MCF 10A (cell line): ENCODE measurements at regions of chr18 and their contacts with region 1.

Region 1: GRCh38 chr18:62522504-62523254 is at the start of gene ZCCHC2:
- DNase-seq: peak; percentile 96
- H3K4me3 Mint-ChIP-seq: peak within 1 kb of the TSS; percentile 76
- H3K27ac Mint-ChIP-seq: peak within 1 kb of the TSS; percentile 58
- H3K4me1 Mint-ChIP-seq: peaks cover 13% of the 10 kb centered on the region
- H3K27me3 Mint-ChIP-seq: no peaks in the 10 kb centered on the region
- CTCF ChIP-seq: no peak
- total RNA-seq, gene ZCCHC2: 14.6 and 15.0 TPM in 2 replicates

Region 2: GRCh38 chr18:62186774-62187542 is 335.7 kb before region 1 on chr18 and contains the starts of genes PIGN and RELCH:
- CTCF ChIA-PET with region 1: no interaction called
- POLR2A ChIA-PET with region 1: interaction called, 8 read pairs
- intact Hi-C with region 1: loop called (anchors 10 kb)
- DNase-seq: peak; percentile 99
- H3K4me3 Mint-ChIP-seq: peak within 1 kb of the TSS; percentile 100
- H3K27ac Mint-ChIP-seq: peak within 1 kb of the TSS; percentile 95
- H3K4me1 Mint-ChIP-seq: peaks cover 11% of the 10 kb centered on the region
- H3K27me3 Mint-ChIP-seq: no peaks in the 10 kb centered on the region
- CTCF ChIP-seq: no peak
- total RNA-seq, gene PIGN: 29.4 and 29.5 TPM in 2 replicates
- total RNA-seq, gene RELCH: 20.7 and 24.7 TPM in 2 replicates

Region 3: DNA sequence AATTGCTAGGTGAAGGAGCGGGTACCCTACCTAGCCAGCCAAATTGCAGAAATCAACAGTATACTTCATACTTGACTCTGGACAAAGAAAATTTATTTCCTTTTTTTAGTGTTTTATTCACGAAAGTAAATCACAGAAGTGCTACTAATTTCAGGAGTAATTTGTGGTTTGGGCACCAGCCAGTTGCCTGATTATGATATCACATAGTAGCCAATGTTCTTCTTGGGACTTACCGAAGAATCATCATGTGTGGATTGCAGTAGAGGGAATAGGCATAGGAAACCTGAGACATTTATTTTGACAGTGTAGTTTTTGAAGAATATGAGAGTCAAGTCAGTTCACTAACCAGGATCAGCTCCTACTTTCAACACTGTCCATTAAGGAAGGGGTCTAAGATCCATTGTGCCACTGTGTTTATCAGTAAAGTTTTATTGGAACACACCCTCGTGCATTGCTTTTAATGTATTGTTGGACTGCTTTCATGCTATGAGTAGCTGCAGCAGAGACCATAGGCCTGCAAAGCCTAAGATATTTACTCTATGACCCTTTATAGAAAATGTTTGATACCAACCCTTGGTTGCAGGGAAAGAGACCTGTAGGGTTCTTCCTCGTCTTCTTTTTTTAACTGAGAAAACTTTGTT is 165.5 kb before region 1 on chr18:
- CTCF ChIA-PET with region 1: no interaction called
- POLR2A ChIA-PET with region 1: no interaction called
- intact Hi-C with region 1: no loop called
- DNase-seq: no peak
- H3K4me3 Mint-ChIP-seq: no peak overlapping the region
- H3K27ac Mint-ChIP-seq: no peak overlapping the region
- H3K4me1 Mint-ChIP-seq: no peaks in the 10 kb centered on the region
- H3K27me3 Mint-ChIP-seq: no peaks in the 10 kb centered on the region
- CTCF ChIP-seq: no peak

Region 4: GRCh38 chr18:62437235-62438017 is 85.3 kb before region 1 on chr18:
- CTCF ChIA-PET with region 1: interaction called, 8 read pairs
- POLR2A ChIA-PET with region 1: interaction called, 117 read pairs
- intact Hi-C with region 1: no loop called
- DNase-seq: peak; percentile 95
- H3K4me3 Mint-ChIP-seq: peak overlapping the region; percentile 55
- H3K27ac Mint-ChIP-seq: peak overlapping the region; percentile 93
- H3K4me1 Mint-ChIP-seq: peaks cover 18% of the 10 kb centered on the region
- H3K27me3 Mint-ChIP-seq: no peaks in the 10 kb centered on the region
- CTCF ChIP-seq: no peak

Region 5: GRCh38 chr18:62460851-62461300 is 61.8 kb before region 1 on chr18:
- CTCF ChIA-PET with region 1: no interaction called
- POLR2A ChIA-PET with region 1: interaction called, 14 read pairs
- intact Hi-C with region 1: no loop called
- DNase-seq: peak; percentile 71
- H3K4me3 Mint-ChIP-seq: no peak overlapping the region
- H3K27ac Mint-ChIP-seq: no peak overlapping the region
- H3K4me1 Mint-ChIP-seq: no peaks in the 10 kb centered on the region
- H3K27me3 Mint-ChIP-seq: no peaks in the 10 kb centered on the region
- CTCF ChIP-seq: no peak

Region 6: GRCh38 chr18:62486304-62486964 is 36.2 kb before region 1 on chr18:
- CTCF ChIA-PET with region 1: no interaction called
- POLR2A ChIA-PET with region 1: interaction called, 22 read pairs
- intact Hi-C with region 1: loop called (anchors 5 kb)
- DNase-seq: peak; percentile 96
- H3K4me3 Mint-ChIP-seq: peak overlapping the region; percentile 56
- H3K27ac Mint-ChIP-seq: peak overlapping the region; percentile 83
- H3K4me1 Mint-ChIP-seq: peaks cover 22% of the 10 kb centered on the region
- H3K27me3 Mint-ChIP-seq: no peaks in the 10 kb centered on the region
- CTCF ChIP-seq: no peak

Region 7: DNA sequence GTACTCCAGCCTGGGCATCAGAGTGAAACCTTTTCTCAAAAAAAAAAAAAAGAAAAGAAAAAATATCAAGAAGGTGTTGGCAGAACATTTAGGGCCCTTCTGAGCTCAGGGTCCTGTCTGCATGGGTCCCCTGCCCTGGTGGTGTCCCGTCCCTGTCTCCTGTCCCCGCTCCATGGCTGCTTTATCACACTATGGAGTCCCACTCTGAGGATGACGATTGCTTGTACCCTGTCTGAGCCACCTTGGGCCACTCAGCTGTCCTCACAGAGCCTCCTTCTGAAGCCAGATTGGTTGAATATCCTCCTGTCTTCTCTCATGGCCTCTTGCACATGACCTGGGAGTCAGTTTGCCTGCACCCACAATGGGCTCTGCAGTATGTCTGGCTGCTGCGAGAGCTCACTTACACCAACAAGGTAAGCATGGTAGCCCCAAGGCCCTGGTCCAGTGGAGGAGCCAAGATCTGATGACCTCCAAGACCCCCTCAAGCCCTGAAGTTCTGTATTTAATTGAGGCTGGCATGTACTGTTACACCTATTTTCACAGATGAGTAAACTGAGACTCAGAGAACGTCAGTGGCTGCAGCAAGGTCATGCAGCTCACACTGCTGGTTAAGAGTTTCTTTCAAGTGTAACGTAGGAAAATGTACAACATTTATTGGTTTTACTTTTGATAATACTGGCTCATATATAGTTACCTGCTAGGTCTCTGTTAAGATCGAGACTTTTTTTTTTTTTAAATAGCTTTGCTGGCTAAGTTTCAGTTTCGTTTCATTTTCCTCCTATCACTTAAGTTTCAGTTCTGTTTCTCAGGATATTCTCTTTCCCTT is 16.8 kb before region 1 on chr18:
- CTCF ChIA-PET with region 1: interaction called, 4 read pairs
- POLR2A ChIA-PET with region 1: interaction called, 62 read pairs
- intact Hi-C with region 1: no loop called
- DNase-seq: peak; percentile 30
- H3K4me3 Mint-ChIP-seq: peak overlapping the region; percentile 75
- H3K27ac Mint-ChIP-seq: peak overlapping the region; percentile 77
- H3K4me1 Mint-ChIP-seq: no peaks in the 10 kb centered on the region
- H3K27me3 Mint-ChIP-seq: no peaks in the 10 kb centered on the region
- CTCF ChIP-seq: no peak